ENCODE measurements at regions of chr15 and their contacts with region 1.

Region 1: GRCh38 chr15:45634442-45635190 is at the start of gene SQOR:
- DNase-seq: peak; percentile 82
- H3K4me3 Mint-ChIP-seq: peak within 1 kb of the TSS; percentile 99
- H3K27ac Mint-ChIP-seq: peak within 1 kb of the TSS; percentile 92
- H3K4me1 Mint-ChIP-seq: peaks cover 50% of the 10 kb centered on the region
- H3K27me3 Mint-ChIP-seq: no peaks in the 10 kb centered on the region
- total RNA-seq, gene SQOR: 139 to 142 TPM

Region 2: GRCh38 chr15:45448516-45448915 is 186.1 kb before region 1 on chr15:
- CTCF ChIA-PET with region 1: no interaction called
- POLR2A ChIA-PET with region 1: no interaction called
- DNase-seq: no peak
- H3K4me3 Mint-ChIP-seq: no peak overlapping the region
- H3K27ac Mint-ChIP-seq: no peak overlapping the region
- H3K4me1 Mint-ChIP-seq: no peaks in the 10 kb centered on the region
- H3K27me3 Mint-ChIP-seq: peaks cover 13% of the 10 kb centered on the region

Region 3: DNA sequence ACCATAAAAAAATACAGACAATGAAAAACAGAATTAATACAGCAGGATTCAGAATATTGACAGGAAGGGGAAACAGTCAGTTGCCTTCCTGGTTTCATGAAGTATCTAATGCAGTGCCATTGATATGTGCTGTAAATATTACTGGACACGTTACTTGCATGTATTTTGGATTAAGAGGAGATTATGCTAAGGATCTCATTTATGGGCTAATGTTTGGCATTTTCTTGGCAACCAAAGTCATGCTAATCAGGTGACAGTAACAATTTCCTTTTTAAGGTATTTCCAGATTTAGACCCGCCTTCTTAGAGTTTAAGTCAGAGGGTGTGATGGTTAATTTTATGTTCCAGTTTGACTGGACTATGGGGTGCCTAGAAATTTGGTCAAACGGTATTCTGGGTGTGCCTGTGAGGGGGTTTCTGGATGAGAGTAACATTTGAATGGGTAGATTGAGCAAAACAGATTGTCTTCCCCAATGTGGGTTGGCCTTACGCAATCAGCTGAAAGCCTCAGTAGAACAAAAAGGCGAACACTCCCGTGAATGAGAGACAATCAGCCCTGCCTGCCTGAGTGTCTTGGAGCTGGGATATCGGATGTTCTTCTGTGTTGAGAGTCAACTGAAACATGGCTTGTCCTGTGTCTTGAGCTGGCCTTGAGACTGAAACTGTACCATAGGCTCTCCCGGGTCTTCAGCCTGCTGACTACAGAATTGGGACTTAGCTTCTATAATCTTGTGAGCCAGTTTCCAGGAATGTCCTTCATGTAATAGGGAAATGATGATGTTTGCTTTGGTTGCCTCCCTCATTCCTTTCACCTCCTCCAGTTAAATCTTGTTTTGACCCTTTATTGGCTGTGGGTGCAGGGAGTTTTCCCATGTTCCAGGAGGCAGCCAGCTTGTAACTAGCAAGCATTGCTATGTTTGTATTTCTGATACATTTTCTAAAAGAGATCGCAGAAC is 10.7 kb after region 1 on chr15:
- CTCF ChIA-PET with region 1: interaction called, 5 read pairs
- POLR2A ChIA-PET with region 1: interaction called, 27 read pairs
- DNase-seq: peak; percentile 36
- H3K4me3 Mint-ChIP-seq: peak overlapping the region; percentile 30
- H3K27ac Mint-ChIP-seq: peak overlapping the region; percentile 62
- H3K4me1 Mint-ChIP-seq: peaks cover 78% of the 10 kb centered on the region
- H3K27me3 Mint-ChIP-seq: no peaks in the 10 kb centered on the region

Measured in activated CD4-positive, alpha-beta memory T cell treated with anti-CD3 and anti-CD28 coated beads, Interleukin-2, amount 10 ng/mL, durations not matched to agents 7 days and 5 days (primary cell).